AG04449 (cell line): ENCODE measurements at regions of chr21 and their contacts with region 1.

Region 1: DNA sequence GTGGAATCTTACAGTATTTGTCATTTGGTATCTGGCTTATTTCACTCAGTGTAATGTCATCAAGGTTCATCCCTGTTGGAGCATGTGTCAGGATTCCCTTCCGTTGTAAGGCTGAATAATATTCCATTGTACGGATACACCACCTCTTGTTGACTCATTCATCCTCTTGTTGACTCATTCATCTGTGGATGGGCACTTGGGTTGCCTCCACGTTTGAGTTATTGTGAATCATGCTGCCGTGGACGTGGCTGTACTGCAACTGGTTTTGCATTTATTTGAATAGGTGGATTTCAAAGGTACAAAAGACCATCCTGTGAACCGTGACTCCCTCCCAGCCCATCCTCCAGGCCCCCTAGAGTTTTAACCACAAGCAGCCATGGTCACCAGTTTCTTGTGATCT is 11.9 kb upstream of the TCP10L start:
- DNase-seq: peak; percentile 36
- H3K4me3 ChIP-seq: no peak overlapping the region
- CTCF ChIP-seq: no peak

Region 2: GRCh38 chr21:32278518-32279376 is 318.5 kb before region 1 on chr21 and contains the start of gene MIS18A:
- CTCF ChIA-PET with region 1: interaction called, 10 read pairs
- POLR2A ChIA-PET with region 1: no interaction called
- DNase-seq: peak; percentile 52
- H3K4me3 ChIP-seq: peak within 1 kb of the TSS; percentile 97
- CTCF ChIP-seq: no peak

Region 3: GRCh38 chr21:32371913-32372314 is 225.3 kb before region 1 on chr21:
- CTCF ChIA-PET with region 1: interaction called, 25 read pairs
- POLR2A ChIA-PET with region 1: no interaction called
- DNase-seq: no peak
- H3K4me3 ChIP-seq: no peak overlapping the region
- CTCF ChIP-seq: no peak

Region 4: GRCh38 chr21:32392880-32393676 is 204.1 kb before region 1 on chr21 and contains the start of gene URB1:
- CTCF ChIA-PET with region 1: interaction called, 46 read pairs
- POLR2A ChIA-PET with region 1: no interaction called
- DNase-seq: no peak
- H3K4me3 ChIP-seq: peak within 1 kb of the TSS; percentile 93
- CTCF ChIP-seq: no peak

Region 5: DNA sequence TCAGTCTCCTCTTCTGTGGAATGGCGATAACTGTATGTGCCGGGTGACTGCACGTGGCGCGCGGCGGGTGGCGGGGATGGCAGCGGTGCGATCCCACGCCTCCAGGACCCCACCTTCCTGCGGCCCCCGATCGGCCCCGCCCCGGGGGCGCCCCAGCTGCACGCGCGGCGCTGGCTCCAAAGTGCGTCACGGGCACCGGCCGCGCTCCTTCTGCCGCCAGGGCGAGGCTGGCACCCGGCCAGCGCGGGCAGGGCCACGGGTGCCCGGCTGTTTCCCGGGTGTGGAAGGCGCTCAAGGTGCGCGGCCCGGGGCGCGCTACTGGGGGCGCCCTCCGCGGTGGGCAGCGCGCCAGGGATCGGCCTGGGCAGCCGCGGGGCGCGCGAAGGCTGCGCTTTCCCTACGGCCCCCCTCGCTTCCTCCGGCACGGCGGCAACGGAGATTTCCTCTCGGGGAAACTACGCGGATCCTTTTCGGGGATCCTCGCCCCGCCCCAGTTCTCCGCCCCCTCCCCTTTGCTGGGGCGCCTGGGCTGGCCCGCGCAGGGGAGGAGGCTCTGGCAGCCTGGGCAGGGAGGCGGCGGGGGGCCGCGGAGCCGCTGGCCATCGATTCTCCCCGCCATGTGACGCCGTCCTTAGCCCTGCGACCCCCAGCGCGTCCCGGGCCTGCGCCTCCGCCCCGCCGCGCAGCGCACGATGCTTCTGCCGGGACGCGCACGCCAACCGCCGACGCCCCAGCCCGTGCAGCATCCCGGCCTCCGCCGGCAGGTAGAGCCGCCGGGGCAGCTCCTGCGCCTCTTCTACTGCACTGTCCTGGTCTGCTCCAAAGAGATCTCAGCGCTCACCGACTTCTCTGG is 184.8 kb before region 1 on chr21 and contains the start of gene EVA1C:
- CTCF ChIA-PET with region 1: interaction called, 52 read pairs
- POLR2A ChIA-PET with region 1: no interaction called
- DNase-seq: no peak
- H3K4me3 ChIP-seq: peak within 1 kb of the TSS; percentile 56
- CTCF ChIP-seq: no peak

Region 6: DNA sequence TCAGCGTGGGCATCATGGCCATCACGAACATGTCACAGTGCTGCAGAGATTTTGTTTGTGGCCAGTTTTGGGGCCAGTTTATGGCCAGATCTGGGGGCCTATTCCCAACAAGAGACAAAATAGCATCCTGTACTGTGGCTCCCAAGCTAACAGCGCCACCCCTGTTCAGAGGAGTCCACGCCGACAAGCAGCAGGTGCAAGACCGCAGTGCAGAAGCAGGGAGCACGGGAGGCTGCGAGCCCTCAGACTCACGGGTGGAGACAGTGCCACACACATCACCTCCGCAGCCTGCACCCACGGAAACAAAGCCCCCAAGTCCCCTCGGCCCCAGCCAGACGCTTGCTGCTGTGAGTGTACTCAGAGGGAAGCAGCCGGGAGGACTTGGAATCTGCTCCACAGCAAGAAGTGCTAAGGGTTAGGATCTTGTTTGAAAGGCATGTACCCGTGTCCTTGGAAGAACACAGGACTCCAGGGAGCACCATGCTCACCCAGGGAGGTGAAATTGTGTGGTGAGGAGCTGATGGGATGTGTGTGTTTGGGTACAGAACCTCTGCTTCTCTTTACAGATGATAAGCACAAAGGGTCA is 19.0 kb before region 1 on chr21:
- CTCF ChIA-PET with region 1: interaction called, 53 read pairs
- POLR2A ChIA-PET with region 1: no interaction called
- DNase-seq: no peak
- H3K4me3 ChIP-seq: no peak overlapping the region
- CTCF ChIP-seq: peak; percentile 47

Region 7: DNA sequence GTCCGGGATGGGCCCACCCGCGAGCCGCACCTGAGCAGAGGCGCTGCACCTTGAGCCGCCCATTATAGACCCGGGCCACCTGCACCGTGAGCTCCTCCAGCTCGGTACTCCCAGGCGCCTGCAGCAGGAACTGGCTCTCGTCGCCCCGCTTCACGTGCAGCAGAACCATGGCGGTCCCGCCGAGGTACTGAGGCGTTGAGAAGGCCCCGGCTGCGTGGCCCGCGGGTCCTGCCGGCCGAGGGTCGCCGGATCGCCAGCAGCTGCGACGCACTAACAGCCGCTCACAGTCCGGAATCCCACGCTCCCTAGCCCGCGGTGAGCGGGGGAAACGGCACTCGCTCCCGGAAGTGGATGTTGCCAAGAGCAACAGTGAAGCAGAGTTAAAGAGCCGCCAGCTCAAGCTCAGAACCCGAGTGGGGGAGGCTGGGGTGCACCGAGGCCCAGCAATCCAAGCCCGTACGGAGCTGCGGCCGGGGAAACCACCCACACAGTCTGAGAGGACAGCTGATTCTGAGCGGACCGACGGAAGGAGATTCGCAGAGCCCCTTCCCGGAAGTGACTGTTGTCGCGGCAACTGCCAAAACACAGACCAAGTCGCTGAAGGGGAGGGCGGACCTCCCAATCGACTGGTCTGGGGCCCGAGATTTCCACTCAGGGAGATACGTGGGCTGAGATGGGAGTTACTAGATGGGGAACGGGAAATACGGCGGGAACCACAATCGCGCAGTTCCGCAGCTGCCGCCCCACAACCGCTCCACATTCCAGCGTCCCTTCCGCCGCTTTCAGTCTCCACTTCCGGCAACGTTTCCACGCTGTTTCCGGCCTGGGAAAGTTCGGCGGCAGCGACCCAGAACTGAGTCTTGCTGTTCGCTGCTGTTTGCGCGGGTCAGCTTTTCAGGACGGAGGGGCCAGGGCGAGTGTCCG is 15.1 kb after region 1 on chr21 and contains the start of gene CFAP298:
- CTCF ChIA-PET with region 1: interaction called, 59 read pairs
- POLR2A ChIA-PET with region 1: interaction called, 6 read pairs
- DNase-seq: peak; percentile 68
- H3K4me3 ChIP-seq: peak within 1 kb of the TSS; percentile 89
- CTCF ChIP-seq: no peak